Left cardiac atrium (tissue), 4 donors: ENCODE measurements at regions of chr1 and their contacts with region 1.

Region 1: GRCh38 chr1:226988334-226988666 is 48.2 kb downstream of the COQ8A start:
- DNase-seq: no peak
- ATAC-seq: no peak

Region 2: DNA sequence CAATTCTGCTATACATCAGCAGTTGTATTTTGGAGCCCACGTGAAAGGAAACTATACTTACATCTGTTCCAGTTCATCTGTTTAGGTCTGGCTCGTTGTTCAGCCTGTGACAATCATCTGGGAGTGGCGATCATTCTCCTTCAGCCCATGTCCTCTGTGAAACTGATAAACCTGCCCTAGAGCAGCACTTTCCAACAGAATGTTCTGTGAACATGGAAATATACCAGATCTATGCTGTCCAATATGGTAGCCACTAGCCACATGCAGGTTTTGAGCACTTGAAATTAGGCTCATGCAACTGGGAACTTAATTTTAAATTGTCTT is 72.7 kb before region 1 on chr1:
- intact Hi-C with region 1: loop called in 1 of 2 experiments (anchors 5 kb)
- DNase-seq: no peak
- ATAC-seq: no peak

Region 3: GRCh38 chr1:226940029-226940805 is 48.1 kb before region 1 on chr1 and contains the start of gene COQ8A:
- intact Hi-C with region 1: loop called in 1 of 2 experiments (anchors 5 kb)
- DNase-seq: peak; percentile 99
- ATAC-seq: peak; percentile 96 to 98
- total RNA-seq, gene COQ8A: 107 to 179 TPM